BJ (cell line): ENCODE measurements at regions of chr11 and their contacts with region 1.

Region 1: DNA sequence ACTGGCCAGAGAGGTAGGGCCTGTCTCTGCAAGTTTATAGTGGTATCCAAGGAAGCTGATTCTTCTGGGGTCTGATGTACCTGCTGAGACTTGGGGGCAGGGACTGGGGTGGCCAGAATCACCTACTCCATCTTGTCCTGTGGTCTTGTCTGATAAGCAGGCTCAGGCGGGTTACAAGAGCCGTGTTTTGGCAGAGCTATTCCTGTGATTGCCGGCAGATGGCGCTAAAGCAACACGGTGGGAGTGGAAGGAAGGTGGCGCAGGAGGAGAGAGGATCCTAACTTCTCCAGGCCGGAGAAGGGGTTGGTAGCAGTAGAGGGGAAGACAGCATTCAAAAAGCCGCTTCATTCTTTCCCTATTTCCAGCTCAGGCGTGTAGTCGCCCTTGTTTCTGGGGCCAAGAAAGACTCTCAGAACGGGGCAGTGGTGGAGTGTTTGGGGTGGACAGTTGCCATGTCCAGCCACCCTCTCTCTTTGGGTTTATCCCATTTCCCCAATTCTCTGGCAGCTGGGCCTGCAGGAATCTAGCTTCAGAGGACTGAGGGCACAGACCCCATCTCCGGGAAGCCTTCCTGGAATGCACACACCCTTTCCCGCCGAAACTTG is 15.1 kb downstream of the CHRM1 start:
- DNase-seq: no peak
- H3K4me3 ChIP-seq: no peak overlapping the region
- H3K27me3 ChIP-seq: no peaks in the 10 kb centered on the region
- CTCF ChIP-seq: peak; percentile 100

Region 2: GRCh38 chr11:62472012-62472884 is 433.8 kb before region 1 on chr11:
- CTCF ChIA-PET with region 1: no interaction called
- POLR2A ChIA-PET with region 1: no interaction called
- DNase-seq: no peak
- H3K4me3 ChIP-seq: no peak overlapping the region
- H3K27me3 ChIP-seq: no peaks in the 10 kb centered on the region
- CTCF ChIP-seq: no peak

Region 3: GRCh38 chr11:62895501-62895900 is 10.5 kb before region 1 on chr11:
- CTCF ChIA-PET with region 1: interaction called, 15 read pairs
- POLR2A ChIA-PET with region 1: no interaction called
- DNase-seq: no peak
- H3K4me3 ChIP-seq: no peak overlapping the region
- H3K27me3 ChIP-seq: peaks cover 2% of the 10 kb centered on the region
- CTCF ChIP-seq: no peak

Region 4: DNA sequence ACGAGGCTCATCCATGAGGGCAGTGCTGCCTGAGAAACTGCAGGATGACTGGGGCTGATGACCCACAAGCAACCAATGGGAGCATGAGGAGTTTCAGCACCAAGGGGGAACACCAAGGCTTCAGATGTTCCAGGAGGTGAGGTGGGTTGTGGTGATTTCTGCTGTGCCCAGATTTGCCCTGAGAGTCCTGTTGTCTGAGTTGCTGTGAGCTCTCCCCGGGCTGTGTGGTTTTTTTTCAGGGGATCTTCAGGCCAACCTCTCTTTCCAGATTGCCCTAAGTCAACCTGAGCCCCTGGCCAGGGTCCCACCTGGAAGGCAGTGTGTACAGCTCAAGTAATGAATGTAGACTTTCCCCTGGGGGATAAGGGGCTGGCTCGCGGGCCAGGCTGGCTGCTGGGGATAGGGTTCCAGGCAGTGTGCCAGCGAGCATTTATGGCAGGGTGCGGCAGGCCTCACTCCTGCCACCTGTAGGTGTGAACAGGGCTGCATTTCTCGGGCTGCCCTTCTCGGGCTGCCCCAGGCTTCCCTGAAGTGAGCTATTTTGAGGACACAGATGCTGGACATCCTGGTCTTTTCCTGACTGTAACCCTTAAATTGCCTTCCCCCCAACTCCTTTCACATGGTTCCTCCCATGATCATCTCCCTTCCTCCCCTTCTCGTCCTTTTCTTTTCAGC is 69.0 kb after region 1 on chr11:
- CTCF ChIA-PET with region 1: interaction called, 10 read pairs
- POLR2A ChIA-PET with region 1: no interaction called
- DNase-seq: no peak
- H3K4me3 ChIP-seq: no peak overlapping the region
- H3K27me3 ChIP-seq: no peaks in the 10 kb centered on the region
- CTCF ChIP-seq: 0 out of 2 replicates have a peak, but pooled peaks have one; percentile 21

Region 5: DNA sequence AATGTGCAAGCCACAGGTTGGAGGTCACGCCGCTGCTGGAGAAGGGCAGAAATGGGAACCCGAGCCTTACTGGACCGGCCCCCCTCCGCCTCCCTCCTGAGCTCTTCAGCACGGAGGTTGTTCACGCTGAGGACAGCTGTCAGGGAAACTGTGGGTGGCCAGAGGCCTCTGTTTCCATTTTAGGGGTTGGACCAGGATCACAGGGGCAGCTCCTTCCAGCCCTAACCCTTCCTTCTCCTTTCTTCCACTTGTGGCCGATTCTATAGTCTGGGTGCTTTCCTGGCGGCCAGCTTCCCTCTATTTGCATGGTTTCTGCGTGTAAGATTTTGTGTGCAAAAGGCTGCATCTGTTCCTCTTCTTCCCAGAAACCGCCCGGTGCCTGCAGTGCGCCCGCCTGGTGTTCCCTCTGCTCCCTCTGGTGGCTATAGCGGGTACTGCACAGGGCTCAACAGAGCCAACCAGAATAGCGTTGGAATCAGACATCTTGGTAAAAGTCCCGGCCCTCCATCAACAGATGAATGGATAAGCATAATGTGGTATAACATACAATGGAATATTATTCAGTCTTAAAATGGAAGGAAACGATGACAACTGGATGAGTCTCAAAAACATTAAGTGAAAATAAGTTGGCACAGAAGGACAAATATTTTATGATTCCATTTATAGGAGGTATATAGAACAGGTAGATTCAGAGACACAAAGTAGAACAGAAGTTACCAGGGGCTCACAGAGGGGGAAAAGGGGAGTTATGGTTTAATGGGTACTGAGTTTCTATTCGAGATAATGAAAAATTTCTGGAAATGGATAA is 118.0 kb after region 1 on chr11:
- CTCF ChIA-PET with region 1: interaction called, 376 read pairs
- POLR2A ChIA-PET with region 1: no interaction called
- DNase-seq: no peak
- H3K4me3 ChIP-seq: no peak overlapping the region
- H3K27me3 ChIP-seq: 0 out of 2 replicates have a peak, but pooled peaks cover 2% of the 10 kb centered on the region
- CTCF ChIP-seq: peak; percentile 100

Region 6: GRCh38 chr11:63212742-63213141 is 306.7 kb after region 1 on chr11:
- CTCF ChIA-PET with region 1: interaction called, 16 read pairs
- POLR2A ChIA-PET with region 1: no interaction called
- DNase-seq: no peak
- H3K4me3 ChIP-seq: no peak overlapping the region
- H3K27me3 ChIP-seq: no peaks in the 10 kb centered on the region
- CTCF ChIP-seq: peak; percentile 50